ENCODE measurements at regions of chr11 and their contacts with region 1.

Region 1: DNA sequence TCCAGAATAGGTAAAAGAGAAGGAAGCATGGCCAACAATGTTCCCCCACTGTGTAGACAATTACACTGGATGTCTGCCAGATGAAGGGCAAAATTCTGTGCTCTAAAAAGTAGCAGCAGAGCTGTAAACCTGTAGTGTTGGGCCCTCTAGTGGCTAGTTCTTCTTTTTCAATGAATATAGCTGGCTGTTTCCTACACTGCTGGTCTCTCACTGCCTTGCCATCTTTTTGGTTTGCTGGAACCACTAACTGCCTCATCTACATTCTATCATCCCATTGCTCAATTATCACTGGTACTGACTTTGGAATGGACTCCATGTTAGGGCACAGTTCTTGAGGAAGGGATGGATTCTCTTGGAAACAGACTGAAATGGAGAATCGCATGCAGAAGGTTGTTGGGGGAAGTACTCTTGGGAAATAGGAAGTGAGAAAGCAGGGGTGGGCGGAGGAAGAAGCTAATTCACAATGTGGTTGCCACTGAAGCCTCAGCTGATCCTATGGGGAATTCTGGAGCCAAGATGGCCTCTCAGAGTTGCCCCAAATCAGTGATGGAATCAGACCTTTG is 17.9 kb downstream of the KCNE3 start:
- DNase-seq: peak; percentile 83
- H3K4me3 Mint-ChIP-seq: no peak overlapping the region
- H3K27ac Mint-ChIP-seq: no peak overlapping the region
- H3K4me1 Mint-ChIP-seq: peaks cover 7% of the 10 kb centered on the region
- H3K27me3 Mint-ChIP-seq: peaks cover 5% of the 10 kb centered on the region

Region 2: DNA sequence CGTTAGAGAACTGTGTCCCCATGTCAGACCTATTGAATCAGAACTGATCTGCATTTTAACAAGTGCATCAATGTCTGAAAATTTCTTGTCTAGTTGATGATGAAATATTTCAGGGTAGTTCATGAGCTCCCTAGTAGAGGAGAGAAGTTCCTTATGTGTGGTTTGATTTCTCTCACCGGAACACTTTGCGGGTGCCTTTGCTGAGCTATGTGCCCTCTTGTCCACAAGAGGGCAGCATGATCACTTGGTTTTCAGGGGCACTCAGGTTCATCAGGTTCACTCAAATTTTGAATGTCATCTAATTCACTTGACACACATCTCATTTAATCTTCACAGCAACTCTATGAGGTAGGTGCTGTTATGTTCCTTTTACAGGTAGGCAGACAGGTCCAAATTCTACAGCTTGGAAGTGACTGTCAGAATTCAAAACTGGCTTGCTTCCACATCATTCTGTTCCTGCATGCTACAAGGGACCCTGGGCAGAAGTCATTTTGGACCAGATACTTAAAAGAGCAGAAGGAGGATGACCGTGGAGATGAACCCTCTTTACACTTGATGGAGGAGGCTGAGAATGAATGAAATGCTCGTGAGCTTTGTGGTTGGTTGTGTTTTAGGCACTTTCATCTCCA is 193.6 kb before region 1 on chr11:
- intact Hi-C with region 1: loop called (anchors 1 kb)
- DNase-seq: peak; percentile 87
- H3K4me3 Mint-ChIP-seq: no peak overlapping the region
- H3K27ac Mint-ChIP-seq: no peak overlapping the region
- H3K4me1 Mint-ChIP-seq: no peaks in the 10 kb centered on the region
- H3K27me3 Mint-ChIP-seq: peaks cover under 1% of the 10 kb centered on the region

Region 3: DNA sequence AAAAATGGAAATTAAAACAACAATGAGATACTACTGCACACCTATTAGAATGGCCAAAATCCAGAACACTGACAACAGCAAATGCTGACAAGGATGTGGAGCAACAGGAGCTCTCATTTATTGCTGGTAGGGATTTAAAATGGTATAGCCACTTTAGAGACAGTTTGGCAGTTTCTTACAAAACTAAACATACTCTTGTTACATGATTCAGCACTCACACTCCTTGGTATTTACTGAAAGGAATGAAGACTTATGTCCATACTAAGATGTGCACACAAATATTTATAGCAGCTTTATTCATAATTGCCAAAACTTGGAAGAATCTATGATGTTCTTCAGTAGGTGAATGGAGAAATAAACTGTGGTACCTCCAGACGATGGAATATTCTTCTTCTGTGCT is 92.0 kb before region 1 on chr11:
- intact Hi-C with region 1: no loop called
- DNase-seq: no peak
- H3K4me3 Mint-ChIP-seq: no peak overlapping the region
- H3K27ac Mint-ChIP-seq: no peak overlapping the region
- H3K4me1 Mint-ChIP-seq: no peaks in the 10 kb centered on the region
- H3K27me3 Mint-ChIP-seq: no peaks in the 10 kb centered on the region

Region 4: GRCh38 chr11:74388678-74389327 is 60.6 kb before region 1 on chr11:
- intact Hi-C with region 1: loop called (anchors 1 kb)
- DNase-seq: peak; percentile 90
- H3K4me3 Mint-ChIP-seq: no peak overlapping the region
- H3K27ac Mint-ChIP-seq: no peak overlapping the region
- H3K4me1 Mint-ChIP-seq: peaks cover 15% of the 10 kb centered on the region
- H3K27me3 Mint-ChIP-seq: no peaks in the 10 kb centered on the region

Region 5: DNA sequence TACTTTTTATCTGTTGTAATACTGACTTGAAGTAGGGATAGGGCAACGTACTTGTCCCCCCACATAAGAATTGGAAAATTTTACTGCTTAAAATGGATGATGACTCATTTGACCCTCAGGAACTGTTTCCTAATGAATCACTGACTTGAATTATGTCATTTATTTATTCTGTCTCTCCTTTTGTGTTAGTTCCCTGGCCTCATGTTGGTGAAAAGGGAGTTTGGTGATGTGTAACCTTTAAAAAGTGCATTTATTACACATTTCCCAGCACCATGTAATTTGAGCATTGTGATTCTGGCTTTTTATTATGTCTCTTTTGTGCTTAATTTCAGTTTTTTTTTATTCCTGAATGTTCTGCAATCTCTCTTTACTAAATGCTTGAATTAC is 30.9 kb before region 1 on chr11:
- intact Hi-C with region 1: no loop called
- DNase-seq: no peak
- H3K4me3 Mint-ChIP-seq: no peak overlapping the region
- H3K27ac Mint-ChIP-seq: peak overlapping the region; percentile 83
- H3K4me1 Mint-ChIP-seq: peaks cover 14% of the 10 kb centered on the region
- H3K27me3 Mint-ChIP-seq: peaks cover 4% of the 10 kb centered on the region

Region 6: DNA sequence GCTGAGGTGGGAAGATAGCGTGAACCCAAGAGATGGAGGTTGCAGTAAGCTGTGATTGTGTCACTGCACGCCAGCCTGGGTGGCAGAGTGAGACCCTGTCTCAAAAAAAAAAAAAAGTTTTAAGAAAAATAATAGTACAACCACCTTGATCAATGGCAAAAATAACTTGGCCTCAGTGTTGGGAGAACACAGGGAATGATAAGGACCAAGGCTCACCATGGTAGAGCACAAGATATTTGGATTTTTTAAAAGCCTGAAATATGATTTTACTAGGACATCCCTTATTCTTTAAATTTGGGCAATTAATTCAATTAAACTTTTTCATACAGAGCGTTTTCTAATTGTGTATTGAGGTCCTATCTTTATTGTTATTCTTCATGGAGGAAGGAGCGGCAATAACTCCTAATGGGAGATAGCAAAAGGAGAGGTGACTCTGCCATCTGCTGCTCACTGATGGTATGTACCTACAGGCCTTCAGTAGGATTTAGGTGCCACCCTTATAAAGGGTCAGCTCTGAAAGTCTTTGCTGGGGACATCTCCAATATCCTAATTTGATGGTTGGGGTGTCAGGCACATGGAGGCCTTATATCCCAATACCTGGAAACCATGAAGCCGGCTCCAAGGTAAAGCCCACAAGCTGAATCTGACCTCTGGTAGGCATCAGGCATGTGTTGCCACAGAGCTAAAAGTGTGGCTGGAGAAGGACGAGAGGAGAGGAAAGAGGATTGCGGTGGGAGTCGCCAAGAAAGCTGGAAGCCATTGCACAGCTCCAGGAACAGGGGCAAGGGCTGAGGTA is 121.0 kb after region 1 on chr11:
- intact Hi-C with region 1: loop called (anchors 1 kb)
- DNase-seq: peak; percentile 67
- H3K4me3 Mint-ChIP-seq: no peak overlapping the region
- H3K27ac Mint-ChIP-seq: no peak overlapping the region
- H3K4me1 Mint-ChIP-seq: no peaks in the 10 kb centered on the region
- H3K27me3 Mint-ChIP-seq: peaks cover 6% of the 10 kb centered on the region

Region 7: DNA sequence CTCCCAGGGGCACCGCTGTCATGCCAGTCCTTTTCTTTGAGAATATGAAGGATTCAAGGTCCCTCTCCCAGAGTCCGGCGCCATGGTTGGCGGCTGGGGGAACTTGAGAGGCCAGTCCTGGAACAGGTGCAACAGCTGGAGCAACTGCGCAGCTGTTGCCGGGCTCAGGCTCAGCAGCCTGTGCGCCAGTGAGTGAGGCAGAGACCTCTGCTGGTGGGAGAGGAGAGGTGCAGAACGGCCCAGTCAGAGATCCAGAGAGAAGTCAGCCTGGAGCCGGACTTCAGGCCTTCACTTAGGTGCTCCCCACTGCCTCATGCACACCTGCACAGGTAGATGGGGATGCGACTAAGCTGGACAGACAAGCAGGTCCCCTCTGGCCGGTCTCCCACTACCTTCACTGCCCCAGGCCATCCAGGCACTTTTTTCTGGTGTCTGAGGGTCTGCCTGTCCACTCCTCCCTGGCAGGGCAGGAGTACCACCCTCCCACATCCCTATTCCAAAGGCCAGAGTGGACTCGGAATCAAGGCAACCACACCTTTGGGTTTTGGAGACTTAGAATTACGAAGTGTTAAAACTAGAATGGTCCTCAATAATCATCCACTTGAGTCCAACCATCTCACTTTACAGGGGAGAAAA is 277.2 kb after region 1 on chr11:
- intact Hi-C with region 1: loop called (anchors 10 kb)
- DNase-seq: peak; percentile 85
- H3K4me3 Mint-ChIP-seq: no peak overlapping the region
- H3K27ac Mint-ChIP-seq: no peak overlapping the region
- H3K4me1 Mint-ChIP-seq: no peaks in the 10 kb centered on the region
- H3K27me3 Mint-ChIP-seq: peaks cover 56% of the 10 kb centered on the region